ENCODE measurements at regions of chr1 and their contacts with region 1.

Region 1: GRCh38 chr1:93814059-93814794 is 64.8 kb downstream of the DNTTIP2 start:
- DNase-seq: peak in 6 of 10 donors; percentile 14 to 62 (median 60)

Region 2: GRCh38 chr1:93437976-93438605 is 376.1 kb before region 1 on chr1:
- intact Hi-C with region 1: loop called (anchors 1 kb)
- DNase-seq: no peak

Region 3: GRCh38 chr1:93629099-93630059 is 184.8 kb before region 1 on chr1:
- intact Hi-C with region 1: loop called (anchors 2 kb)
- DNase-seq: peak in 2 of 10 donors; percentile 38 to 46

Region 4: GRCh38 chr1:93779540-93780192 is 34.6 kb before region 1 on chr1:
- intact Hi-C with region 1: no loop called
- DNase-seq: no peak

Region 5: DNA sequence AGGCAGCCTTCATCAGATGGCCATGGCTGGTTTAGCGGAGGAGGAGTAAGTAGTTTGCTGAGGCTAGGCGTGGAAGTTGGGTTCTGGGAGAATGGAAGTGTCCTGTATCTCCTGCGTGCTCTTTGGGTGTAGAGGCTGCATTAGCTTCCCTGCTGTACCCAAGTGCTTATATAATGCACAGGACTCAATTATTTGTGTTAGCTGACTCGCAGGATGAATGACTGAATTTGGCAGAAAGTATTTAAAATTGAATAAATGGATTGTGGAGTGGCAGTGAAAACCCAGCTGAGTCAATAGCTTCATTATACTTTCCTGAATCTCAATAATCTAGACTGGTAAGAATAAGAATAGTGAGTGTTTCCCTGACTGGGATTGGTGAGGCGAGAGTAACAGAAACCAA is 51.0 kb after region 1 on chr1:
- intact Hi-C with region 1: no loop called
- DNase-seq: no peak

Region 6: GRCh38 chr1:93878889-93879586 is 64.8 kb after region 1 on chr1 and contains the start of gene DNTTIP2:
- intact Hi-C with region 1: no loop called
- DNase-seq: peak; percentile 87 to 98 (median 95)